A673 (cell line): ENCODE measurements at regions of chrX and their contacts with region 1.

Region 1: DNA sequence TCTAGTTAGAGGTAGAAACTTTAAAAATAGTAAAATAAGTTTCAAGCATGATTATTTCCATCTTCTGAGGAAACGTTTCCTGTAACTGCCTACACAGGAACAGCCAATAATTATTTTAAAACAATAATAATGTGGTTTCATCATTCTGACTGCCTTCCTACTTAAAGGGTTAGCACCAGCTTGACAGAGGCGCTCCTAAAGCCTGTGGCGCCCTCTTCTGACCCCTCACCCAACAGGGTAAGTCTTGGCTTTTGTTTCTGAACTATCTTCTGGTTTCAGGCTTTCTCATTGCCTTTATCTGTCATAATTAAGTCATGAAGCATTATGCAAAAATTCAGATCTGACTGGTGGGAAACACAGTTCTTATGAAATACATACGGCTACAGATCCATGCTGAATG is 96.7 kb downstream of the ITM2A start:
- DNase-seq: peak; percentile 92
- H3K4me3 ChIP-seq: no peak overlapping the region
- H3K27ac ChIP-seq: peak overlapping the region; percentile 90
- H3K4me1 ChIP-seq: peaks cover 50% of the 10 kb centered on the region
- H3K27me3 ChIP-seq: no peaks in the 10 kb centered on the region
- CTCF ChIP-seq: peak; percentile 78

Region 2: DNA sequence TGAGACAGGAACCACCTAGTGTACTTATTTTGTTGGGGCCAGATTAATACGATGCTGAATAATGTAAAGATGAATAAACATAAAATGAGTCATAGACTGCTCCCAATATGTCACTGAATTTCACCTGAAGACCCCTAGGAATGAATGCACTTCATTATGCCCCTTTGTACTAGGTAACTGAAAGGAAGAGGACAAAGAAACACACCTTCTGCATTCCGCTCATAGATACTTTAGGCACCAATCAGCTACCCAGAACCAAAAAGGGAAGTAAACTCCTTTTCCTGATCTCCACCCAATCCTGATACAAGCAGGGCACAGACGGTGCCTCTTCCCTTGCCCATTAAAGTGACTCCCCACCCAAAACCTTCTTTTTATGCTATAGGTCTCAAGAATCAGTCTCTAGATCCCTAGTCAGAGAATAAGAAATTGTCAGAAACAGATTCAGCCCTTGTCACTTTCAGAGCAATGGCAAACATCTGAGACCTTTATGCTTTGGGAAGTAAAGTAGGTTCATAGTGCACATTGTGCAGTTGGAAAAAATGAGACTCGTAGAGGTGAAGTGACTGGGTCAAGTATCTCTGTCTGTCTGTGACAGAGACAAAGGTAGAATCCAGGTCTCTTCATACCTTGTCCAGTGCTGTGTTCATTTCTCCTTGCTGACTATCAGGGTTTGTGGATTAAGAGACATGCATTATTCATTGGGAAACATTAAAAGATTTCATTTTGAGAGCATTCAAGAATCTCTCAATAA is 123.6 kb before region 1 on chrX:
- CTCF ChIA-PET with region 1: no interaction called
- POLR2A ChIA-PET with region 1: no interaction called
- intact Hi-C with region 1: loop called (anchors 5 kb)
- DNase-seq: peak; percentile 45
- H3K4me3 ChIP-seq: peak overlapping the region; percentile 56
- H3K27ac ChIP-seq: peak overlapping the region; percentile 77
- H3K4me1 ChIP-seq: peaks cover 14% of the 10 kb centered on the region
- H3K27me3 ChIP-seq: no peaks in the 10 kb centered on the region
- CTCF ChIP-seq: no peak

Region 3: GRCh38 chrX:79336869-79337815 is 66.7 kb after region 1 on chrX:
- CTCF ChIA-PET with region 1: no interaction called
- POLR2A ChIA-PET with region 1: no interaction called
- intact Hi-C with region 1: loop called (anchors 2 kb)
- DNase-seq: peak; percentile 71
- H3K4me3 ChIP-seq: peak overlapping the region; percentile 29
- H3K27ac ChIP-seq: peak overlapping the region; percentile 88
- H3K4me1 ChIP-seq: peaks cover 12% of the 10 kb centered on the region
- H3K27me3 ChIP-seq: no peaks in the 10 kb centered on the region
- CTCF ChIP-seq: no peak

Region 4: DNA sequence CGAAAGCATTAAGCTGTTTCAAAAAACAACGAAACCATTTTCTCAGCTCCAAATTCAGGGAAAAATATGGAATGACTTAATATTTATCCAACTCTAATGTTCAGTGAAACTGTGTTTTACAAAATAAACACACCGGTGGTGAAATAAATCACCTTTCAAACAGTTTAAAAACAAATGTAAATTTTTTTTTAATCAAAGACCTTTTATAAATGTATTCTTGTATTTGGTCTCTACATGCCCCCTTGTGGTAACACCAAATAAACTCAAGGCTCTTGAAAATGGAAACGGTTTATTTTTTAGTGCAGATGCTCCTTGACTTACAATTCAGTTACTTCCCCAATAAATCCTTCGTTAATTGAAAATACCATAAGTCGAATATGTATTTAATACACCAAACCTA is 142.6 kb after region 1 on chrX:
- CTCF ChIA-PET with region 1: no interaction called
- POLR2A ChIA-PET with region 1: no interaction called
- intact Hi-C with region 1: loop called (anchors 2 kb)
- DNase-seq: peak; percentile 73
- H3K4me3 ChIP-seq: peak overlapping the region; percentile 29
- H3K27ac ChIP-seq: peak overlapping the region; percentile 64
- H3K4me1 ChIP-seq: peaks cover 40% of the 10 kb centered on the region
- H3K27me3 ChIP-seq: no peaks in the 10 kb centered on the region
- CTCF ChIP-seq: peak; percentile 65

Region 5: DNA sequence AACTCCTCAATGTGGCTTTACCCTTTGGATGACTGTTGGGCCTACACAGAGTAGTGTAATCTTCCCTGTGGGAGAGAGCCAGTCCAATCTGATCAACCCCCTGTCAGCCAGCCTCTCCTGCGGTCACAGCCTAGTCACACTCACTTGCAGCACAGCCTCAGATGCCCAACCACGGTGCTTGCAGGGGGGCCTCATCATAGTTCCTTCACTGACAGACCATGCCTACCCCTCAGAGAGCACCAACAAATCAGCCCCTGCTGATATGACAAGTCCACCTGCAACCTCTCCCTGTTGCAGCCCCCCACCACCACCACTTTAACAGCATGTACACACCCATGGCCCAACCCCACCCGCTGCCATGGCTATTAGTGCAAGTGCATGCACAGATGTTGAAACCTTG is 1784.5 kb after region 1 on chrX:
- CTCF ChIA-PET with region 1: no interaction called
- POLR2A ChIA-PET with region 1: no interaction called
- intact Hi-C with region 1: no loop called
- DNase-seq: no peak
- H3K4me3 ChIP-seq: no peak overlapping the region
- H3K27ac ChIP-seq: no peak overlapping the region
- H3K4me1 ChIP-seq: no peaks in the 10 kb centered on the region
- H3K27me3 ChIP-seq: no peaks in the 10 kb centered on the region
- CTCF ChIP-seq: no peak